B cell (primary cell): ENCODE measurements at regions of chr10 and their contacts with region 1.

Region 1: GRCh38 chr10:79242620-79243152 is 104.6 kb upstream of the PPIF start:
- DNase-seq: peak; percentile 84
- ATAC-seq: peak; percentile 42
- H3K4me3 ChIP-seq: peak overlapping the region; percentile 19 to 69 (median 63)
- H3K4me3 Mint-ChIP-seq: peak overlapping the region; percentile 91
- H3K27ac ChIP-seq: peak overlapping the region; percentile 65 to 70
- H3K27ac Mint-ChIP-seq: peak overlapping the region; percentile 91
- H3K4me1 ChIP-seq: peaks cover 47 to 53% of the 10 kb centered on the region in 2 donors
- H3K4me1 Mint-ChIP-seq: peaks cover 54% of the 10 kb centered on the region
- H3K27me3 ChIP-seq: no peaks in the 10 kb centered on the region
- H3K27me3 Mint-ChIP-seq: no peaks in the 10 kb centered on the region
- CTCF ChIP-seq: no peak

Region 2: GRCh38 chr10:79068562-79069324 is 173.9 kb before region 1 on chr10 and contains the start of gene ZMIZ1:
- CTCF ChIA-PET with region 1: no interaction called
- POLR2A ChIA-PET with region 1: no interaction called
- intact Hi-C with region 1: loop called (anchors 2 kb)
- DNase-seq: peak; percentile 87
- ATAC-seq: peak; percentile 58
- H3K4me3 ChIP-seq: peak within 1 kb of the TSS; percentile 61 to 94 (median 67)
- H3K4me3 Mint-ChIP-seq: peak within 1 kb of the TSS; percentile 97
- H3K27ac ChIP-seq: no peak within 1 kb of the TSS
- H3K27ac Mint-ChIP-seq: peak within 1 kb of the TSS; percentile 74
- H3K4me1 ChIP-seq: peaks cover 18 to 35% of the 10 kb centered on the region in 2 donors
- H3K4me1 Mint-ChIP-seq: peaks cover 37% of the 10 kb centered on the region
- H3K27me3 ChIP-seq: peaks cover 0 to 30% (median 25%) of the 10 kb centered on the region in 4 experiments
- H3K27me3 Mint-ChIP-seq: peaks cover 28% of the 10 kb centered on the region
- CTCF ChIP-seq: peak; percentile 2
- total RNA-seq, gene ZMIZ1: 59.6 and 64.9 TPM in 2 replicates

Region 3: DNA sequence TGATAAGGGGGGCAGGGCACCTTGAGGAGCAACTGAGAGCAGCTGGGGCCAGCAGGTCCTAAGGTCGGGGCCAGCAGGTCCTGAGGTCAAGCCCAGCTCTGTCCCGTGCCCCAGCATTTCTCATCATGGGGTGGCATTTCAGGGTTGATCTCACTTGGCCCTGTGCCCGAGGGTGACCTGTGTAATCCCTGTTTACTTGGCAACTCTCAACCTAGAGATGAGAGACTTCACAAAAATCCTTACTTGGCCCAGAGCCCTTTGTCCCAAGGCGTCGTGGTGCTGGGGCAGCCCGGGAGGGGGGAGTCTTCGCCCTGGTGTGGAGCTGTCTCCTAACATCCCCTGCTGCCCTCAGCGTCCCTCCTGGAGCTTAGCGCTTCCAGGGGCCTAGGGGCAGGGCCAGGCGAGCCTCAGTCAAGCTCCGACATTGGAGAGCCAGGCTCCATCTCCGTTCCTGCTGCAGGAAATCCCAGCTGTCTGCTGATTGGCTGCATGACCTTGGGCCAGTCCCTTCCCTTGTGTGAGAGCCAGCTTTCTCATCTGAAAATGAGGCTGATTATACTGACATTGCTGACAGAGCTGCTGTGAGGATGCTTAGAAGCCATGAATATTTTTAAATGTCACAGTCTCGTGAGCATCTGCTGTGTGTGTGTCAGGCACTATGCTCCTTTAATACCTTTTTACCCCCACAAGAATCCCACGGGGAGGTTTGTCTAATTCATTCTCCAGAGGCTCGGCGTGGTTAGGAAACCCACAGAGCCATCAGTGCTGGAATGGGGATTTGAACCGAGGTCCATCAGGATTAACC is 79.6 kb before region 1 on chr10:
- CTCF ChIA-PET with region 1: no interaction called
- POLR2A ChIA-PET with region 1: no interaction called
- intact Hi-C with region 1: no loop called
- DNase-seq: no peak
- ATAC-seq: no peak
- H3K4me3 ChIP-seq: no peak overlapping the region
- H3K4me3 Mint-ChIP-seq: no peak overlapping the region
- H3K27ac ChIP-seq: no peak overlapping the region
- H3K27ac Mint-ChIP-seq: no peak overlapping the region
- H3K4me1 ChIP-seq: no peaks in the 10 kb centered on the region
- H3K4me1 Mint-ChIP-seq: no peaks in the 10 kb centered on the region
- H3K27me3 ChIP-seq: no peaks in the 10 kb centered on the region
- H3K27me3 Mint-ChIP-seq: peaks cover 3% of the 10 kb centered on the region
- CTCF ChIP-seq: no peak

Region 4: GRCh38 chr10:79221110-79222051 is 21.3 kb before region 1 on chr10:
- CTCF ChIA-PET with region 1: no interaction called
- POLR2A ChIA-PET with region 1: no interaction called
- intact Hi-C with region 1: no loop called
- DNase-seq: no peak
- ATAC-seq: no peak
- H3K4me3 ChIP-seq: no peak overlapping the region
- H3K4me3 Mint-ChIP-seq: no peak overlapping the region
- H3K27ac ChIP-seq: no peak overlapping the region
- H3K27ac Mint-ChIP-seq: peak overlapping the region; percentile 6
- H3K4me1 ChIP-seq: no peaks in the 10 kb centered on the region
- H3K4me1 Mint-ChIP-seq: no peaks in the 10 kb centered on the region
- H3K27me3 ChIP-seq: no peaks in the 10 kb centered on the region
- H3K27me3 Mint-ChIP-seq: no peaks in the 10 kb centered on the region
- CTCF ChIP-seq: no peak

Region 5: DNA sequence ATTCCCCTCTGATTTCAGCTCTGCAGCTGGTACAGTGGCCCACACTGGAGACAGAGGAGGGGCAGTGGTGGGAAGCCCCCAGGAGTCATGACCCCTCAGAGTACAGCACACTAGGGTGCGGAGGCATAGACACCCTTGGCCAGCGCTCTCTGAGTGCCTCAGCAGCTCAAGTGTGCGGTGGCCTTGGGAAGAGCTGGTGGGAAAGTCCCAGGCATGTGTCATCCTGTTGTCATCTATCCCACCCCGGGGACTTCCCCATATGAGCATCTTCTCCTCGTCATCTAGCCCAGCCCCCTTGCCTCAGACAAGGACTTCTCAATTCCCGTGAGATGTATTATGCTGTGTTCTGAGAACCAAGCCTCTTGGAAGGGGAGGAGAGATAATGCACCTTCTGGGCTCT is 89.0 kb after region 1 on chr10:
- CTCF ChIA-PET with region 1: interaction called, 4 read pairs
- POLR2A ChIA-PET with region 1: interaction called, 3 read pairs
- intact Hi-C with region 1: loop called (anchors 5 kb)
- DNase-seq: peak; percentile 87
- ATAC-seq: peak; percentile 93
- H3K4me3 ChIP-seq: no peak overlapping the region
- H3K4me3 Mint-ChIP-seq: peak overlapping the region; percentile 57
- H3K27ac ChIP-seq: no peak overlapping the region
- H3K27ac Mint-ChIP-seq: peak overlapping the region; percentile 71
- H3K4me1 ChIP-seq: peaks cover 8 to 13% of the 10 kb centered on the region in 2 donors
- H3K4me1 Mint-ChIP-seq: peaks cover 20% of the 10 kb centered on the region
- H3K27me3 ChIP-seq: no peaks in the 10 kb centered on the region
- H3K27me3 Mint-ChIP-seq: no peaks in the 10 kb centered on the region
- CTCF ChIP-seq: no peak

Region 6: GRCh38 chr10:79445141-79445976 is 202.7 kb after region 1 on chr10 and contains the start of gene ZCCHC24:
- CTCF ChIA-PET with region 1: no interaction called
- POLR2A ChIA-PET with region 1: no interaction called
- intact Hi-C with region 1: loop called (anchors 2 kb)
- DNase-seq: peak; percentile 97
- ATAC-seq: peak; percentile 91
- H3K4me3 ChIP-seq: peak within 1 kb of the TSS; percentile 44 to 73 (median 65)
- H3K4me3 Mint-ChIP-seq: peak within 1 kb of the TSS; percentile 94
- H3K27ac ChIP-seq: no peak within 1 kb of the TSS
- H3K27ac Mint-ChIP-seq: peak within 1 kb of the TSS; percentile 86
- H3K4me1 ChIP-seq: peaks cover 18 to 29% of the 10 kb centered on the region in 2 donors
- H3K4me1 Mint-ChIP-seq: peaks cover 26% of the 10 kb centered on the region
- H3K27me3 ChIP-seq: peaks cover 0 to 12% (median 5%) of the 10 kb centered on the region in 4 experiments
- H3K27me3 Mint-ChIP-seq: no peaks in the 10 kb centered on the region
- CTCF ChIP-seq: no peak
- total RNA-seq, gene ZCCHC24: 2.1 and 2.3 TPM in 2 replicates

Region 7: DNA sequence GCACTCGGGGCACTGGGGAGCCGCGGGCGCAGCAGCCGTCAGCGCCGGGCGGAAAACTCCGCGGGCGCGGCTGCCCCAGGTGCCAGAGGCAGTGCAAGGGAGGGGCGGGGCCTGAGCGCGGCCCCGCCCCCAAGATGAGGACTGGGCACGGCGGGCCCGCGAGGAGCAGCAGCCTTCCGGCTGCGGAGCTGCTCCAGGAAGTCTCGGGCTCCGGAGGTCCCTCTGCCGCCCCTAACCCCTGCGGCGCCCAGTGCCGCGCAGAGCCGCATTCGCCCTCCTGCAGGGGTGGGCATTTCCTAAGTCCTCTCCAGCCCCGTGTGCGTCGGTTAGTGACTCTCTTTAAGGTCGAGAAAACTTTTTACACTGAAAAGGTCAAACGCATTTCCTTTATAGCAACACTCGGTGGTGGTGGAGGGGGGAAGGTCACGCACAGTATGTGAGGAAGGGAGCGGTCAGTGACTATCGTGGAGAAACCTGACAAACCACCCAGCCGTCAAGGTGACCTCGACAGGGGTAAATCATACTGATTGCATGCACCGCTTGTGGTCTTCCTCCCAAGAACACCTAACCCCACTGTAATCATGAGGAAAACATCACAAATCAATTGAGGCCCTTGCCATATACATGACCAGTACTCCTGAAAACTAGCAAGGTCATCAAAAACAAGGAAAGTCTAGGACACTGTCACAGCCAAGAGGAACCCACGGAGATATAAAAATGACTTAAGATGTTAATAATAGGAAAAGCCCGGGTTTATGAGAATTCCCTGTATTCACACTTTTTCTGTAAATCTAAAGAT is 963.0 kb after region 1 on chr10 and contains the start of gene ANXA11:
- CTCF ChIA-PET with region 1: no interaction called
- POLR2A ChIA-PET with region 1: no interaction called
- intact Hi-C with region 1: loop called (anchors 5 kb)
- DNase-seq: peak; percentile 90
- ATAC-seq: peak; percentile 87
- H3K4me3 ChIP-seq: peak within 1 kb of the TSS; percentile 53 to 90 (median 74)
- H3K4me3 Mint-ChIP-seq: peak within 1 kb of the TSS; percentile 94
- H3K27ac ChIP-seq: peak within 1 kb of the TSS; percentile 75 to 91
- H3K27ac Mint-ChIP-seq: peak within 1 kb of the TSS; percentile 97
- H3K4me1 ChIP-seq: peaks cover 41 to 50% of the 10 kb centered on the region in 2 donors
- H3K4me1 Mint-ChIP-seq: peaks cover 50% of the 10 kb centered on the region
- H3K27me3 ChIP-seq: peaks cover 0 to 2% (median 0%) of the 10 kb centered on the region in 4 experiments
- H3K27me3 Mint-ChIP-seq: no peaks in the 10 kb centered on the region
- CTCF ChIP-seq: no peak
- total RNA-seq, gene ANXA11: 156 and 177 TPM in 2 replicates